Ascending aorta (tissue), 2 donors: ENCODE measurements at regions of chr22 and their contacts with region 1.

Region 1: GRCh38 chr22:20268279-20269012 is at the start of gene RTN4R:
- DNase-seq: peak in 1 of 2 donors; percentile 72
- H3K4me3 ChIP-seq: peak within 1 kb of the TSS; percentile 68 to 75
- H3K27ac ChIP-seq: no peak within 1 kb of the TSS
- H3K4me1 ChIP-seq: peaks cover 10 to 11% of the 10 kb centered on the region in 2 donors
- H3K27me3 ChIP-seq: no peaks in the 10 kb centered on the region
- CTCF ChIP-seq: peak; percentile 47 to 90 (median 62)
- total RNA-seq, gene RTN4R: 0.43 TPM

Region 2: GRCh38 chr22:20156611-20157429 is 111.6 kb before region 1 on chr22:
- intact Hi-C with region 1: loop called (anchors 1 kb)
- DNase-seq: peak; percentile 37 to 87
- H3K4me3 ChIP-seq: no peak overlapping the region
- H3K27ac ChIP-seq: no peak overlapping the region
- H3K4me1 ChIP-seq: no peaks in the 10 kb centered on the region
- H3K27me3 ChIP-seq: peaks cover 4% of the 10 kb centered on the region
- CTCF ChIP-seq: peak; percentile 98 to 100 (median 99)

Region 3: DNA sequence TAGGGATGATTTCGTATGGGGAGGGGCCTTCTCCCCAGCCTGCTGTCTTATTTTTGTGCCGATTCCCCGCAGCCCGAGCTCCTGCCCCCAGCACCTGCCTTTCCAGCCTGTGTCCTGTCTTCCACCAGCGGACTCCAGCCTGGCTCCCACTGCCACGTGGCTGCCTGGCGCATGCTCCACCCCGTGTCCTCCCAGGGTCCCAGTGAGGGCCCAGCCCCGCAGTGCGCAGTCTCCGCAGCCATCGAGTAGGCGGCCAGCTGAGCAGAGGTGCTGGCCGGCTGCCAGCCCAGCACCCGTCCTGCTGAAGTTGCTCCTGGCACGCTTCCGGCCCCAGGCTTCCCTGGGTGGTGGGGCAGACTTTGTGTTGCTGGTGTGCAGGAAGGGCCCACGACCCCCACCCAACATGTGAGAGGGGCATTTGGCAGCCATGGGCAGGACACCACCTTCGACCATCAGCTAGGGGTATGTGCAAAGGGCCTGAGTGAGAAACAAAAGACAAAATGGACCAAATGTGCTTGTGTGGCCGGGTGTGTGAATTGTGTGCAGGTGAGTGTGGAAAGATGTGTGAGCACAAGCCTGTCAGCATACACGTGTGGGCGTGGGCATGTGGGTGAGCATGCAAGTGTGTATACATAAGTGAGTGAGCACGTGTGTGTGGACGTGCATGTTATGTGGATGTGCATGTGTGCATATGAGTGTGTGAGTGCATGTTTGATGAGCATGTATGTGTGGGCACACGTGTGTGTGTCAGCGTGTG is 56.3 kb before region 1 on chr22:
- intact Hi-C with region 1: loop called (anchors 5 kb)
- DNase-seq: peak in 1 of 2 donors; percentile 74
- H3K4me3 ChIP-seq: no peak overlapping the region
- H3K27ac ChIP-seq: peak overlapping the region; percentile 32 to 55
- H3K4me1 ChIP-seq: peaks cover 10 to 43% of the 10 kb centered on the region in 2 donors
- H3K27me3 ChIP-seq: no peaks in the 10 kb centered on the region
- CTCF ChIP-seq: no peak

Region 4: GRCh38 chr22:20284471-20285086 is 16.1 kb after region 1 on chr22:
- intact Hi-C with region 1: loop called (anchors 1 kb)
- DNase-seq: no peak
- H3K4me3 ChIP-seq: no peak overlapping the region
- H3K27ac ChIP-seq: no peak overlapping the region
- H3K4me1 ChIP-seq: no peaks in the 10 kb centered on the region
- H3K27me3 ChIP-seq: no peaks in the 10 kb centered on the region
- CTCF ChIP-seq: no peak